Right lobe of liver (tissue), 6 donors: ENCODE measurements at regions of chr17 and their contacts with region 1.

Region 1: GRCh38 chr17:39547713-39548478 is 59.8 kb downstream of the NEUROD2 start:
- DNase-seq: peak; percentile 52 to 61 (median 60)
- ATAC-seq: peak; percentile 65 to 81 (median 75)
- H3K4me3 ChIP-seq: no peak overlapping the region
- H3K27ac ChIP-seq: no peak overlapping the region
- H3K4me1 ChIP-seq: peaks cover 0 to 7% (median 4%) of the 10 kb centered on the region in 4 donors
- H3K27me3 ChIP-seq: no peaks in the 10 kb centered on the region
- CTCF ChIP-seq: peak; percentile 69 to 95 (median 95)
- POLR2A ChIP-seq: no peak

Region 2: DNA sequence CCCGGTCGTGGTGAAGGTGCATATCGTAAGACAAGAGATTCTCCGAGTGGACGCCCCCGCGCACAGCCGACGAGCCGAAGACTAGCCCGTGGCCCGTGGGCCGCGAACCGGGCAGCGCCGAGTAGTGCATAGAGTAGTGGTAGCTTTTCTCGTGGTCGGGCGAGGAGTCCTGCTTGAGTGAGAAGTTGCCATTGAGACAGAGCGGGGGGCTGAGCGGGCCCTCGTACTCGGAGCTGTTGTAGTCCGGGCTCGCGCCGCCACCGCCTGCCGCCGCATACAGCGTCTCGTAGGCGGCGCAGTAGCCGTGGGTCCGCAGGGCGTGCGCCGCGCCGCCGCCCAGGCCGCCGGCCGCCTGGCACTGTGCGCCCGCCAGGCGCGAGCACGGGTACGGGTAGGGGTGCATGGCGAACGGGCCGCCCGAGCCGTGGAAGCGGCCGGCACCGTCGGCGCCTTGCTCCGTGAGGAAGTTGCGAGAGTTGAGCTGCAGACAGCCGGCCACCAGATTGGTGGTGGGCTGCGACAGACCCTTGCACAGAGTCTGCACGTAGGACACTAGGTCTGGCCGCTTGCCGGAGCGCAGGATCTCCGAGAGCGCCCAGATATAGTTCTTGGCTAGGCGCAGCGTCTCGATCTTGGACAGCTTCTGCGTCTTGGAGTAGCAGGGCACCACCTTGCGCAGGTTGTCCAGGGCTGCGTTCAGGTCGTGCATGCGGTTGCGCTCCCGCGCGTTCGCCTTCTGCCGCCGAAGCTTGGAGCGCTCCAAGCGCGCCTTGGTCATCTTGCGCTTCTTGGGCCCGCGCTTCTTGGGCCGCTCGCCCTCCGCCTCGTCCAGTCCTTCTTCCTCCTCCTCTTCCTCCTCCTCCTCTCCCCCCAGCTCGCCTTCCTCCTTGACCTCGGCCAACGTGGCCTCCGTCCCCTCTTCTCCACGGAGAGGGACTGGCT is 57.9 kb after region 1 on chr17:
- intact Hi-C with region 1: loop called in 1 of 2 experiments (anchors 10 kb)
- DNase-seq: no peak
- ATAC-seq: peak in 3 of 4 donors; percentile 6 to 30 (median 15)
- H3K4me3 ChIP-seq: no peak overlapping the region
- H3K27ac ChIP-seq: no peak overlapping the region
- H3K4me1 ChIP-seq: peaks cover 0 to 11% (median 0%) of the 10 kb centered on the region in 4 donors
- H3K27me3 ChIP-seq: peaks cover 18 to 50% of the 10 kb centered on the region in 2 donors
- CTCF ChIP-seq: no peak
- POLR2A ChIP-seq: no peak

Region 3: GRCh38 chr17:39740357-39741131 is 192.6 kb after region 1 on chr17:
- intact Hi-C with region 1: loop called in 1 of 2 experiments (anchors 10 kb)
- DNase-seq: peak in 1 of 3 donors; percentile 52
- ATAC-seq: peak in 1 of 4 donors; percentile 17
- H3K4me3 ChIP-seq: peak overlapping the region; percentile 51 to 82 (median 72)
- H3K27ac ChIP-seq: peak overlapping the region in 2 of 3 donors; percentile 62 to 94
- H3K4me1 ChIP-seq: peaks cover 0 to 15% (median 5%) of the 10 kb centered on the region in 4 donors
- H3K27me3 ChIP-seq: no peaks in the 10 kb centered on the region
- CTCF ChIP-seq: no peak
- POLR2A ChIP-seq: no peak